ENCODE measurements at regions of chr9 and their contacts with region 1.

Region 1: DNA sequence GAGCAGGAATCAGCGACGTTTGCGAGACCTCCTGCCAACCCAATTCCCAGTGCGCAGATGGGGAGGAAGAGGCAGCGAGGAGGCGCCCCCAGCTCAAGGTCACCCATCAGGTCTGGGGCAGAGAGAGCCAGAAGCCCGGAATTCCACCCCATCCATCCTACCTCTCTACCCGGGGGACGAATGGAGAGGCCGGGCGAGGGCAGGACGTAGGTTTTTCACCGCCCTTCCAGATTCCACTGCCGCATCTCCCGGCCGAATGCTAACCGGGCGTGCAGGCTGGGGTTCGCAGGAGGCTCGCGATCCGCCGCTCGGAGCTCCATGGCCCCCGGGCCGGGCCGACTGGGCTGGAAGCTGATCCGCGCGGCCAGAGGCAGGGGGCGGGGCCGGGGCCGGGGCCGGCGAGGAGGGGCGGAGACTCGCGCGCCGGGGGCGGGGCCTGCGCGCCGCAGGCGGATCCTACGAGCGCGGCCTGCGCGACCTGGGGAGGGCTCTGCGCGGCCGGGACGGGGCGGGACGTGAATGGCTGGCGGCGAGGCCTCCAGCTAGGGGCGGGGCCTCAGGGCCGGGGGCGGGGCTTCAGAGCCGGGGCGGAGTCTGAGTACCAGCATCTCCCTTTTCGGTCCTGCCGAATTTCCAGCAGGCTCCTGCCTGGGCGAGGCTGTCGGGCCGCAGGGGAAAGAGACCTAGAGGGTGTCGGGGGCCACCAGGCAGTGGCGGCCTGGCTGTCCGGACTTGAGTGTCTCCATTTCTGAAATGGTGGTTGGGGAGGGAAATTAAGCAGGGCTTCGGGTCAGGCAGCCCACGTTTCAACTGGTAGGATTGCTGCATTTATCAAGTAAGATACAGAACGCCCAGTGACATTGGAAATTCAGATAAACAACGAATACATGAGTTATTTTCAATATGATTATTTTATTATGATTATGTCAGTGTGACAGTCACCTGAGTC is at the start of gene ST6GALNAC4:
- DNase-seq: peak; percentile 61 to 95
- H3K4me3 ChIP-seq: peak within 1 kb of the TSS; percentile 92
- H3K27ac ChIP-seq: peak within 1 kb of the TSS; percentile 97
- H3K4me1 ChIP-seq: peaks cover 64% of the 10 kb centered on the region
- H3K27me3 ChIP-seq: no peaks in the 10 kb centered on the region
- CTCF ChIP-seq: no peak
- total RNA-seq, gene ST6GALNAC4: 28.3 and 44.3 TPM in 2 replicates

Region 2: GRCh38 chr9:127503947-127504782 is 412.8 kb before region 1 on chr9:
- CTCF ChIA-PET with region 1: no interaction called
- POLR2A ChIA-PET with region 1: no interaction called
- intact Hi-C with region 1: loop called (anchors 5 kb)
- DNase-seq: peak; percentile 60 to 85
- H3K4me3 ChIP-seq: no peak overlapping the region
- H3K27ac ChIP-seq: no peak overlapping the region
- H3K4me1 ChIP-seq: no peaks in the 10 kb centered on the region
- H3K27me3 ChIP-seq: no peaks in the 10 kb centered on the region
- CTCF ChIP-seq: peak; percentile 85

Region 3: GRCh38 chr9:127785023-127785932 is 131.7 kb before region 1 on chr9:
- CTCF ChIA-PET with region 1: interaction called, 4 read pairs
- POLR2A ChIA-PET with region 1: no interaction called
- intact Hi-C with region 1: loop called (anchors 5 kb)
- DNase-seq: peak; percentile 47 to 91
- H3K4me3 ChIP-seq: peak overlapping the region; percentile 99
- H3K27ac ChIP-seq: no peak overlapping the region
- H3K4me1 ChIP-seq: peaks cover 8% of the 10 kb centered on the region
- H3K27me3 ChIP-seq: no peaks in the 10 kb centered on the region
- CTCF ChIP-seq: peak; percentile 94

Region 4: GRCh38 chr9:127869310-127870152 is 47.4 kb before region 1 on chr9:
- CTCF ChIA-PET with region 1: interaction called, 4 read pairs
- POLR2A ChIA-PET with region 1: no interaction called
- intact Hi-C with region 1: loop called (anchors 2 kb)
- DNase-seq: peak; percentile 64 to 94
- H3K4me3 ChIP-seq: no peak overlapping the region
- H3K27ac ChIP-seq: no peak overlapping the region
- H3K4me1 ChIP-seq: peaks cover 4% of the 10 kb centered on the region; the same call in 1 of the 2 replicates
- H3K27me3 ChIP-seq: no peaks in the 10 kb centered on the region
- CTCF ChIP-seq: peak; percentile 91

Region 5: GRCh38 chr9:127877566-127877998 is 39.4 kb before region 1 on chr9 and contains the start of gene AK1:
- CTCF ChIA-PET with region 1: interaction called, 18 read pairs
- POLR2A ChIA-PET with region 1: no interaction called
- intact Hi-C with region 1: no loop called
- DNase-seq: peak in 1 of 2 experiments; percentile 74
- H3K4me3 ChIP-seq: peak within 1 kb of the TSS; percentile 62
- H3K27ac ChIP-seq: no peak within 1 kb of the TSS
- H3K4me1 ChIP-seq: peaks cover 19% of the 10 kb centered on the region; the same call in 1 of the 2 replicates
- H3K27me3 ChIP-seq: no peaks in the 10 kb centered on the region
- CTCF ChIP-seq: no peak
- total RNA-seq, gene AK1: 84.5 and 86.8 TPM in 2 replicates

Measured in PC-9 (cell line).